ENCODE measurements at regions of chr14 and their contacts with region 1.

Region 1: DNA sequence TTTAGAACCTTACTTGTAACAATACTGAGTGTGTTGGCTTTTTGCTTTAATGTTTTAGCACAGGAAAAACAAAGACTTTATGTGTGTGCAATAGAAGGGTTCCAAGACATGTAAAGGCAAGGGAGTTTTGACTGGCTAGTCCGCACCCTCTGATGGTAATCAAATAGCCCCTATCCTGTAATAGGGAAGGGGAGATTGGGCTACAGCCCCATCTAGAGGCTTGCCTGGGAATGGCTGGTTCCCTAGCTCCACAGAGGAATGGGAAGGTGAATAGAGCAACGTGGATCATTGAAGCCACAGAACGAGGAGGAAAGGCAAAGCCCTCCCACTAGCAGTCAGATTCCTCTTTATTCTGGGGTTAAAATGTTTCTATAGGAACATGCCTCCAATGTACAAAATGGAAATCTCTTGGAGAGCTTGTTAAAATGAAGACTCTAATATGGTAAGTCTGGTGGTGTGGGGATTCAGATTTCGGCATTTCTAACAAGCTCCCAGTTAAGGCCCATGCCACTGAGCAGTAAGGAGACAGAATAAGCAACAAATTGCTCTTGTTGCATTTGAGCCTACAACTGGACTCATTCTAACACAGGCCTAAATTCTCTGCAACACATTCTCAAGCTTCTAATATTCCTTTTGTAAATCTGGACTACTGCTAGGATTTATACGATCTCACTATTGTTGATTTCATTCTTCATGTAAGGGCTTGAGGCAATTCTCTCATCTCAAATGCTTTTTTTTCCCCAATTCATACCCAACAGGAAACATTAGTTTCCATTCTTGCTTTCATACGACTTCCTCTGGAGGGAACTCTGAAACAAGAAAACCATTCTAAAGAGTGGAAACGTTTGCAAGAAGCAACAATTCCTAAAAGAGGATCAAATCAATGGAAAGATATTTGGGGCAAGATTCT is 57.1 kb downstream of the NIN start:
- DNase-seq: peak; percentile 56
- H3K4me3 Mint-ChIP-seq: no peak overlapping the region
- H3K27ac Mint-ChIP-seq: no peak overlapping the region
- H3K4me1 Mint-ChIP-seq: peaks cover 16% of the 10 kb centered on the region
- H3K27me3 Mint-ChIP-seq: no peaks in the 10 kb centered on the region

Region 2: DNA sequence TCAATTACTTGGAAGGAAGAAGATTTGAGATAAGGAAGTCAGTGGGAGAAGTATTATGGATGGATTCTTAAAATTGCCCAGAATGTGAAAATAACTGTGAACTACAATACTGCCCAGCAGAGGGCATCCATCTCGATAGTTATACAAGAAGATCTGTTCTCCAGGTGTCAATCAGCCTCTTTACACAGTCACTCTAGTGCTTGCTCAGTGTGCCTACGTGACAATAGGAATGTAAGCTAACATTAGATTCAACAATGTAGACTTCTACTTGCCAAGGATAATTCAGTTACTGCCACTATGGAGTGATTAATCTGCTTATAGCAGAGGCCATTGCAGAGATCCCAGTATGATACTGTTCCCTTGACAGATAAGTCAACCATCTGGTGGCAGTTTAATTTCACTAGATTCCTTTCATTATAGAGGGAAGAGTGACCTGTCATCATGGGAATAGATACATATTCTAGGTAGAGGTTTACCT is 230.9 kb before region 1 on chr14:
- CTCF ChIA-PET with region 1: interaction called, 165 read pairs
- POLR2A ChIA-PET with region 1: no interaction called
- intact Hi-C with region 1: loop called (anchors 1 kb)
- DNase-seq: peak; percentile 20
- H3K4me3 Mint-ChIP-seq: no peak overlapping the region
- H3K27ac Mint-ChIP-seq: no peak overlapping the region
- H3K4me1 Mint-ChIP-seq: peaks cover 9% of the 10 kb centered on the region
- H3K27me3 Mint-ChIP-seq: no peaks in the 10 kb centered on the region

Region 3: GRCh38 chr14:50599700-50600444 is 174.0 kb before region 1 on chr14:
- CTCF ChIA-PET with region 1: interaction called, 74 read pairs
- POLR2A ChIA-PET with region 1: interaction called, 5 read pairs
- intact Hi-C with region 1: loop called (anchors 1 kb)
- DNase-seq: no peak
- H3K4me3 Mint-ChIP-seq: no peak overlapping the region
- H3K27ac Mint-ChIP-seq: no peak overlapping the region
- H3K4me1 Mint-ChIP-seq: peaks cover 4% of the 10 kb centered on the region
- H3K27me3 Mint-ChIP-seq: no peaks in the 10 kb centered on the region

Region 4: GRCh38 chr14:50619556-50620141 is 154.2 kb before region 1 on chr14:
- CTCF ChIA-PET with region 1: interaction called, 46 read pairs
- POLR2A ChIA-PET with region 1: no interaction called
- intact Hi-C with region 1: loop called (anchors 1 kb)
- DNase-seq: no peak
- H3K4me3 Mint-ChIP-seq: no peak overlapping the region
- H3K27ac Mint-ChIP-seq: no peak overlapping the region
- H3K4me1 Mint-ChIP-seq: peaks cover 3% of the 10 kb centered on the region
- H3K27me3 Mint-ChIP-seq: no peaks in the 10 kb centered on the region

Region 5: DNA sequence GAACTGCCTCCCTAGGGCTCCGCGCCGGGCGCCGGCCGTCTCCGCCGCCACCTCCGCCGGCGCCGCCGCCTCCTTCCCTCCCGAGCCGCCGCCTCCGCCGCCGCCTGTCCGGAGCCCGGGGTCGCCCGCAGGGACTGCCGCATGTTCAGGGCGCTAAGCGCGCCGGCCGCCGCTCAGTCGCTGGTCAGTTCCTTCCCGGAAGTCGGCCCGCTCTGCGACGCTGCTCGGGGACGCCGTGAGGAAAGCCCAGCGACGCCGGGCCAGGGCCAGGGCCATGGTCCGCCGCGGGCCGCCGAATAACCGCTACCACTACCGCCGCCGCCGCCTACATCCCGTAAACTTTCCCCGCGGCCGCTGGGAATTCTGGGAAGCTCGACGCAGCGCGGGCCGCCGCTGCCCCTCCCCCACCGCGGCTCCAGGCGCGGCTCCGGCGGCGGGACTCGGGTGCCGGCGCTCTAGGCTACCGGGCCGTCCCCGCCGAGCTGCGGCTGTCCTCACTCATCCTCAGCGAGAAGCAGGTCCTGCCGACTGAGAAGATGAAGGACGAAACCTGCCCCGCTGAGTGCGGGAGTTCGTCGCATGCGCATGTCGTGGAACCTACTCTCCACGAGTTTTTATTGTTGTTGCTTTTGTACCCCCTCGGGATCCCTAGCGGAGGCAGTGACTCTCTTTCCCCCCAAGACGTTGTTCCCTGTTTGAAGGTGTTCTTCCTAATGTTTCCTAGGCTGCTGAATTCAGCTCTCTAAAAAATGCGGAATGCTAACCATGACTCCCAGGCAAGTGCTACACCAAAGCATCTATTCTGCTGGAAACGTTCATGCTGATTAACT is 105.7 kb before region 1 on chr14 and contains the start of gene SAV1:
- CTCF ChIA-PET with region 1: interaction called, 10 read pairs
- POLR2A ChIA-PET with region 1: interaction called, 10 read pairs
- intact Hi-C with region 1: loop called (anchors 5 kb)
- DNase-seq: peak; percentile 67
- H3K4me3 Mint-ChIP-seq: no peak within 1 kb of the TSS
- H3K27ac Mint-ChIP-seq: peak within 1 kb of the TSS; percentile 63
- H3K4me1 Mint-ChIP-seq: peaks cover 18% of the 10 kb centered on the region
- H3K27me3 Mint-ChIP-seq: no peaks in the 10 kb centered on the region
- total RNA-seq, gene SAV1: 13.4 to 13.5 TPM

Region 6: GRCh38 chr14:50762001-50762930 is 11.6 kb before region 1 on chr14:
- CTCF ChIA-PET with region 1: interaction called, 146 read pairs
- POLR2A ChIA-PET with region 1: interaction called, 3 read pairs
- intact Hi-C with region 1: no loop called
- DNase-seq: peak; percentile 77
- H3K4me3 Mint-ChIP-seq: no peak overlapping the region
- H3K27ac Mint-ChIP-seq: peak overlapping the region; percentile 24
- H3K4me1 Mint-ChIP-seq: peaks cover 25% of the 10 kb centered on the region
- H3K27me3 Mint-ChIP-seq: no peaks in the 10 kb centered on the region

Region 7: GRCh38 chr14:50785457-50786063 is 11.7 kb after region 1 on chr14:
- CTCF ChIA-PET with region 1: interaction called, 41 read pairs
- POLR2A ChIA-PET with region 1: no interaction called
- intact Hi-C with region 1: no loop called
- DNase-seq: no peak
- H3K4me3 Mint-ChIP-seq: no peak overlapping the region
- H3K27ac Mint-ChIP-seq: no peak overlapping the region
- H3K4me1 Mint-ChIP-seq: peaks cover 55% of the 10 kb centered on the region
- H3K27me3 Mint-ChIP-seq: no peaks in the 10 kb centered on the region

Region 8: DNA sequence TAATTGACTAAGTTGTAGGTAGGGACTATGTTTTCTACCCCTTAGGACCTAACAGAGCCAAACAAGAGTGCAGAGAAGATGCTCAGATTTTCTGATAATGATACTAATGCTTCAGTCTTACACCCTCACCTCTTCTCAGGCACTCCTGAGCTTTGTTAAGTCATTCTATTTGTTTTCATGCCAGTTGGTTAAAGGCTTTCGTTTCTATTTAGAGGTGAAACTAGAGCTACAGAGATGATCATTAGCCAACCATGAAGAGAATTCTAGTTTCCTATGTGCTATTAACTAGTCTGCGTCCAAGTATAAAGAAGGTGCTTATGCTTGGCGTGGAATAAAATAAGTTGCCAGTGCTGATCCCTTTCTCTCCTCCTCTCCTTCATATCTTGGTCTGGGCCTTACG is 205.0 kb after region 1 on chr14:
- CTCF ChIA-PET with region 1: no interaction called
- POLR2A ChIA-PET with region 1: no interaction called
- intact Hi-C with region 1: no loop called
- DNase-seq: no peak
- H3K4me3 Mint-ChIP-seq: no peak overlapping the region
- H3K27ac Mint-ChIP-seq: no peak overlapping the region
- H3K4me1 Mint-ChIP-seq: no peaks in the 10 kb centered on the region
- H3K27me3 Mint-ChIP-seq: peaks cover 2% of the 10 kb centered on the region